ENCODE measurements at regions of chr18 and their contacts with region 1.

Region 1: DNA sequence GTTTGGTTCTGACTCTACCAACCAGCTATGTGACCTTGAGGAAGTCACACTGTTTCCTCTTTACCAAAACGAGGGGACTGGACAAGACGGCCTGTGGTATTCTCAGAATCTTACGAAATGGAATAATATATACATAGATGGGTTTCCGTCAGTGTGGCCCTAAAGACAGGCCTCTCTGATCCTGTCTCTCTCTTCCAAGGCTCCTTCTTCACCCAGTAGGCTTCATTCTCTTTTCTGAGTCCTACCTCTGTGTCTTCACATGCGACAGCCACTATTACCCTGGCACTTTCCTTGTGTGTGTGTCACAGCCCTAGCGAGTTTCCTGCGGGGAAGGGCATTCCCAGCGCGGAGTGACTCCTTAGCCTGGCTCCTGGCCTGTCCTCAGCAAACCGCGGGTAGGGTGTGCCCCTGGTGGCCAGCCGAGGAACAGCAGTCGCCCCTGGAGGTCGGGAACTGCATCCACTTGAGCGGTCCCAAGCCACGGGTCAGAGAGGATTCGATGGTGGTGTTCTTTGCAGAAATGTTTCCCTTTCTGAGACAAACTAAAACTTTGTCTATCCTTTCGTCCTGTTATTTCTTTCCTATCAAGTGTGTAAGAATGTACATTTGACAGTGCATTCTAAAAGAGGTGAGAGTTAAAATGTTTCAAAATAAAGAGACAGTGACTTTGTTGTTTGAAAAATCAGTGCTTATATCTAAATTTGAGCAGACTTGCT is 63.3 kb downstream of the RAB31 start:
- DNase-seq: peak; percentile 66
- ATAC-seq: peak; percentile 95
- H3K4me3 Mint-ChIP-seq: peak overlapping the region; percentile 13
- H3K27ac Mint-ChIP-seq: no peak overlapping the region
- H3K4me1 Mint-ChIP-seq: peaks cover 28% of the 10 kb centered on the region
- H3K27me3 Mint-ChIP-seq: no peaks in the 10 kb centered on the region
- CTCF ChIP-seq: peak; percentile 95

Region 2: DNA sequence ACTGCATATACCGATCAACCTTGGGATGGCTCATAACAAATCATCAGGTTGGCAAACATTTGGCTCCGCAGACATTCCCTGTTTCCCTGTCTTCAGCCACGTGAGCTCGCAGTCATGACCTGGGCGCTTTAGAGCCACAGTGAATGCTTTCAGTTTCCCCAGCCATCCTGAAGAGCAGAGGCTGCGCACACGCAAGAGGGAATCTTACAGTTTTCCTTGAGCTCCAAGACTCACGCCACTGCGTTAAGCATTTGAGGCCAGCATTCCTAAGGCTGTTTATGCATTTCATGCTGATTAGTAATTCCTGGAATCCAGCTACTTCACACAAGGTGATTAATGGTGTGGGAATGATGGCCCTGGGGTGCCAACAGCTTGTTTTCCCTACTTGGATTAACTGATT is 971.0 kb before region 1 on chr18:
- CTCF ChIA-PET with region 1: no interaction called
- POLR2A ChIA-PET with region 1: no interaction called
- intact Hi-C with region 1: no loop called
- DNase-seq: no peak
- ATAC-seq: no peak
- H3K4me3 Mint-ChIP-seq: no peak overlapping the region
- H3K27ac Mint-ChIP-seq: no peak overlapping the region
- H3K4me1 Mint-ChIP-seq: no peaks in the 10 kb centered on the region
- H3K27me3 Mint-ChIP-seq: peaks cover 3% of the 10 kb centered on the region
- CTCF ChIP-seq: no peak

Region 3: GRCh38 chr18:9575558-9575957 is 195.9 kb before region 1 on chr18:
- CTCF ChIA-PET with region 1: interaction called, 6 read pairs
- POLR2A ChIA-PET with region 1: no interaction called
- intact Hi-C with region 1: loop called (anchors 1 kb)
- DNase-seq: no peak
- ATAC-seq: peak; percentile 40
- H3K4me3 Mint-ChIP-seq: no peak overlapping the region
- H3K27ac Mint-ChIP-seq: no peak overlapping the region
- H3K4me1 Mint-ChIP-seq: no peaks in the 10 kb centered on the region
- H3K27me3 Mint-ChIP-seq: no peaks in the 10 kb centered on the region
- CTCF ChIP-seq: no peak

Region 4: GRCh38 chr18:9673296-9674251 is 97.8 kb before region 1 on chr18:
- CTCF ChIA-PET with region 1: no interaction called
- POLR2A ChIA-PET with region 1: no interaction called
- intact Hi-C with region 1: loop called (anchors 1 kb)
- DNase-seq: peak; percentile 25
- ATAC-seq: peak; percentile 95
- H3K4me3 Mint-ChIP-seq: peak overlapping the region; percentile 35
- H3K27ac Mint-ChIP-seq: peak overlapping the region; percentile 93
- H3K4me1 Mint-ChIP-seq: peaks cover 15% of the 10 kb centered on the region
- H3K27me3 Mint-ChIP-seq: no peaks in the 10 kb centered on the region
- CTCF ChIP-seq: no peak

Region 5: DNA sequence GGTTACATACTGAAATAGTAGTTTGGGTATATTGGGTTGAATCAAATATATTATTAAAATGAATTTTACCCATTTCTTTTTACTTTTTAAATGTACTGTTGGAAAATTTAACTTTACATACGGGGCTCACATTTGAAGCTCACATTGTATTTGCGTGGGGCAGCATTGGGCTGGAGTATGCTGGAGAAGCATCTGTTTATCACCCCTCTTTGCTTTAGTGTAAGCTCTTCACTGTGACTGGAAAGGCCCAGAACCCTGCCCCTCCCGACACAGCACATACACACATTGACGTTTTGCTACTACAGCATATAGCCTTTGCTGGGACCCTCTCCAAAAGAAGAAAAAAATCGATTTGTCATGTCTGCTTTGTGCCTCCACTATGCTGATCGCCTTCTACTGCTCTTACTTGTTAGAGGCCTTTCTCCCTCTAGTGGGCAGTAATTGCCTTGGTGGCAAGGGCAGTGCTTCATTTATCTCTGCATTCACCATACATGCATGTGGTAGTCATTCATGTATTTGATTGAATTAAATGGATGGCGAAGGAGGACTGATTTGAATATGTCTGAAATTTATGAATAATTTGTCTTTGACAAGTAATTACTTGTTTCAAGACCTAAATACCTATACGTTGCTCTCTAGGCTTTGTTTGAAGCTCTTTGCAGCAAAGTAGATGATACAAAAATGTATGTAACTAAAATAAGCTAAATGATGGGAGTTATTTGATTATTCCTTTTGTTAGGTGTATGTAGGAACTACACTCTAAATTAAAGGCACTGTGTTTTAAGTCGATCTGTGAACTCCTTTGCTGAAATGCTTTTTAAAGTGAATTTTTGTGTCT is 179.8 kb after region 1 on chr18:
- CTCF ChIA-PET with region 1: no interaction called
- POLR2A ChIA-PET with region 1: no interaction called
- intact Hi-C with region 1: no loop called
- DNase-seq: no peak
- ATAC-seq: peak; percentile 47
- H3K4me3 Mint-ChIP-seq: no peak overlapping the region
- H3K27ac Mint-ChIP-seq: no peak overlapping the region
- H3K4me1 Mint-ChIP-seq: peaks cover 12% of the 10 kb centered on the region
- H3K27me3 Mint-ChIP-seq: no peaks in the 10 kb centered on the region
- CTCF ChIP-seq: no peak